Posterior vena cava (tissue), 2 donors: ENCODE measurements at regions of chr16 and their contacts with region 1.

Region 1: GRCh38 chr16:65988024-65988595 is 378.4 kb upstream of the CDH5 start:
- DNase-seq: no peak

Region 2: GRCh38 chr16:64589836-64590235 is 1398.3 kb before region 1 on chr16:
- intact Hi-C with region 1: loop called in 1 of 2 experiments (anchors 5 kb)
- DNase-seq: no peak

Region 3: DNA sequence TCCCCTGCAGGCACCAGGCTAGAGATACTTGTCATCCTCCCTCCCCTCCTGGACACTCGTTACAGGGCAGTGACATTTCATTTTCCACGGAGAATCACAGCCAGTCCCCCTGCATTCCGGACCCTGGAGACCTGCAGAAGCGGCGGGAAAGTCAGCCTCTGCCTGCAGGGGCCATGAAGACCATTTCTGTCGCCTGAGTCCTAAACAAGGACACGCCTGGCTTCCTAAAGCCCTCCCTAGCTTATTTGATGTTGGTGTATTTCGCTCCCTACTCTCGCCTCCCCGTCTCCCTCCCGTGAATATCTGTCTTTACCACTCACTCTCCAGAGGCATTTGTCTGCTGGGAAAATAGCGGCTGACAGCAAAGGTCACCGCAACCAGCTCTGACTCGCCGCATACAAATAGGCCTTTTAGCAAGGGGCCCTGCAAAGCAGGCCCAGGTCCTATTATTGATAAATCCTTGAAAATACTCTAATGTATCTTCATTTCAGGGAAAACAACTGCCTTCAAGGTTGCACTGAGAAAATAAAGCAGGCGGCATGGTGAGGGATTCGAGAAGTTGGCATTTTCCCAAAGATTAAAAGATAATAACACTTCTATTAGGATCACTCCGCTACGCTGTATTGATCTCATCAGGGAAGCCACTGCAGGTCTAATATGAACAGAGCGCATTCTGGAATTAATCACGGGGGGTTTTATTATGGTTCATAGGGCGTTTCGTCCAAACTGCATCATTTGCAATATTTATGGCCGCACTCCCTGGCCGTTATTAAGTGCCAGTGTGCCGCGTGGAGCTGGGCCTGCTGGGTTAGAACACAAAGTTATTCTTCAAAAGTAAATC is 68.7 kb before region 1 on chr16:
- intact Hi-C with region 1: no loop called
- DNase-seq: no peak